ENCODE measurements at regions of chr10 and their contacts with region 1.

Region 1: DNA sequence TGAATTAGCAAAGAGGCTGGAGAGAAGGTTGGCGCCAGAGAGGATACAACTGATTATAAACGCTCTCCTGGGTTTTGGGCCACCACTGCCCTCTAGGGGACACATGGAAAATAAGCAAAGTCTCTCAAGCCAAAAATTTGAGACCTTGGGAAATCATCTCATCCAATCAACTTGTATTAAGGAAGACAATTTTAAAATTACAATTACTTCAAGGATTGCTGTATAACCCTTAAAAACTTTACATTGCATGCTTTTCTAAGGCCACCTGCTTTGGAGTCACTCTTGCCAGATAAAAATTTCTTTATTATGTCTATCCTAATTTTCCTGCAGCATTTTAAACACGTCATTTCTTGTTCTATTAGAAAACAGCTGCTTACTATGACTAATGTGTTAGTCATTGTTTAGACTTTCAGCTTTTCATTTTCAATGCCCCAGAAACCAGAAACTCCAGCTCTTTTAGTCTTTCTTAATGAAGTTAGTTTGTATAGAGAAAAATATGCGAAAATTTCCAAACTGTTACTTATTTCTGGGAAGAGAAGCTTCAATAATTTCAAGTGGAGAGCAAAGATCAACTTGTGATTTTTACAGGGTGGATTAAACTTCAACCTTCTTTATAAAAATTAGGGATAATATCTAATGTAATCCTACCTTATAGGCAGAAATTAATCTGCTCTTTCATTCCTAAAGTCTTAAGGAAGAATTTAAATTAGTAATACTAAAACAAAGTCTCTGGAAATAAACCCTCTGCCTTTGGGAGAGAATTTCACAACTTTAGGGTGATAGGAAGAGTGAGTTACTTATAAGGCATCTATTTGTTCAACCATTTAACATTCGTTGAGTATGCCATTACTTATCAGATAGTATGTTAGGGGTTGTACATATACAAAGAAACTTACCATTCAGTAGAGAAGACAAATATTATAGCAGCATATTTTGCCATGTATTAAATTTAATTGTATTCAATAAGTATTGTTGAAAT is 20.6 kb upstream of the RHOBTB1 start:
- DNase-seq: peak; percentile 83

Region 2: GRCh38 chr10:60816628-60817397 is 147.7 kb before region 1 on chr10:
- in situ Hi-C with region 1: loop called (anchors 25 kb)
- DNase-seq: peak; percentile 77

Measured in ACHN (cell line).